Activated CD4-positive, alpha-beta memory T cell treated with anti-CD3 and anti-CD28 coated beads for 36 hours (primary cell): ENCODE measurements at regions of chr2 and their contacts with region 1.

Region 1: GRCh38 chr2:189661148-189661956 is at the start of gene ASNSD1:
- DNase-seq: peak; percentile 98
- H3K4me3 Mint-ChIP-seq: no peak within 1 kb of the TSS
- H3K27ac Mint-ChIP-seq: no peak within 1 kb of the TSS
- H3K4me1 Mint-ChIP-seq: peaks cover 51% of the 10 kb centered on the region
- H3K27me3 Mint-ChIP-seq: no peaks in the 10 kb centered on the region
- total RNA-seq, gene ASNSD1: 44.5 to 47.0 TPM

Region 2: GRCh38 chr2:189037518-189037917 is 623.8 kb before region 1 on chr2:
- CTCF ChIA-PET with region 1: no interaction called
- POLR2A ChIA-PET with region 1: no interaction called
- intact Hi-C with region 1: no loop called
- DNase-seq: no peak
- H3K4me3 Mint-ChIP-seq: no peak overlapping the region
- H3K27ac Mint-ChIP-seq: no peak overlapping the region
- H3K4me1 Mint-ChIP-seq: peaks cover 3% of the 10 kb centered on the region
- H3K27me3 Mint-ChIP-seq: no peaks in the 10 kb centered on the region

Region 3: GRCh38 chr2:189641590-189641989 is 19.8 kb before region 1 on chr2:
- CTCF ChIA-PET with region 1: interaction called, 5 read pairs
- POLR2A ChIA-PET with region 1: interaction called, 9 read pairs
- intact Hi-C with region 1: loop called (anchors 1 kb)
- DNase-seq: peak; percentile 74
- H3K4me3 Mint-ChIP-seq: no peak overlapping the region
- H3K27ac Mint-ChIP-seq: peak overlapping the region; percentile 36
- H3K4me1 Mint-ChIP-seq: peaks cover 27% of the 10 kb centered on the region
- H3K27me3 Mint-ChIP-seq: no peaks in the 10 kb centered on the region

Region 4: DNA sequence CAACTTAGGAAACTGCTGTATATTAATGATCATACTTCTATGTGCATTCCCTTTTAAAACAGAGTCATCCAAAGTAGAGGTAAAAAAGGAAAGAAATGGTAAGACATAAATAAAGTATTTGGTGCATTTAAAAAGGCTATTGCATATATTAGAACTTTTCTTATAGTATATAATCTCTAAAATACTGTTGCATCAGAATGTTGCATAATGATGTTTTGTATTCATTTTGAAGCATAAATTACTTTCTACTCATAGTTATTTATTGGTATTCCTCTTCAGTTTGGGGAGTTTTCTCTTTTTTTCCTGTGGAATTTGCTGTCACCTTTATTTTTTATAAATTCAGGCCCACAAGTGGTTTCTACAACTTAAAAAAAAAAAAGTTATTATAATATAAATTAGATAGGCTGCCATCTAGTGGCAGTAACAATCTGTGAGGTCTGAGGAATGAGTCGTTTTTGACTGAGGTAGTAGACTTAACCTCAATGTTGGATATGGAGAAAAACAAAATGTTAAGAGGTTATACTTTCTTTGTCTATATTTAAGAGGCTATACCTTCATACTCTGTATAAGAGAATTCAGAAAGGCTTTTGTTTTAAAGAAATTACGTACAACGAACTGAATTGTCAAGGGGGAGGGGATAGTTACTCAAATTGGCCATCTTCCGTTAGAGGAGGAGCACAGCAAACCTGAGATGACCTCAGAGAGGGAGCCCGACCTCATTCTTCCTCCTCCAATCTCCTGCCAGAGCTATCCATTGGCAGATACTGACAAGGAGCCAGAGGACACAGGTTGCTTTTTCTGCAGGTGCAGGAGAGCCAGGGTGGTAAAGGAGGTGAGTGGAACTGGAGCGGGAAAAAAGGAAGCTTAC is 36.9 kb after region 1 on chr2:
- CTCF ChIA-PET with region 1: interaction called, 80 read pairs
- POLR2A ChIA-PET with region 1: no interaction called
- intact Hi-C with region 1: loop called (anchors 1 kb)
- DNase-seq: no peak
- H3K4me3 Mint-ChIP-seq: no peak overlapping the region
- H3K27ac Mint-ChIP-seq: no peak overlapping the region
- H3K4me1 Mint-ChIP-seq: no peaks in the 10 kb centered on the region
- H3K27me3 Mint-ChIP-seq: no peaks in the 10 kb centered on the region

Region 5: GRCh38 chr2:189783927-189784867 is 122.8 kb after region 1 on chr2 and contains the starts of genes ORMDL1 and PMS1:
- CTCF ChIA-PET with region 1: interaction called, 6 read pairs
- POLR2A ChIA-PET with region 1: interaction called, 6 read pairs
- intact Hi-C with region 1: loop called (anchors 1 kb)
- DNase-seq: peak; percentile 96
- H3K4me3 Mint-ChIP-seq: peak within 1 kb of the TSS; percentile 90
- H3K27ac Mint-ChIP-seq: peak within 1 kb of the TSS; percentile 95
- H3K4me1 Mint-ChIP-seq: peaks cover 52% of the 10 kb centered on the region
- H3K27me3 Mint-ChIP-seq: no peaks in the 10 kb centered on the region
- total RNA-seq, gene ORMDL1: 47.0 to 49.8 TPM
- total RNA-seq, gene PMS1: 36.0 to 38.6 TPM

Region 6: GRCh38 chr2:190319555-190320498 is 658.5 kb after region 1 on chr2 and contains the start of gene HIBCH:
- CTCF ChIA-PET with region 1: interaction called, 3 read pairs
- POLR2A ChIA-PET with region 1: no interaction called
- intact Hi-C with region 1: loop called (anchors 1 kb)
- DNase-seq: peak; percentile 96
- H3K4me3 Mint-ChIP-seq: peak within 1 kb of the TSS; percentile 87
- H3K27ac Mint-ChIP-seq: peak within 1 kb of the TSS; percentile 94
- H3K4me1 Mint-ChIP-seq: peaks cover 52% of the 10 kb centered on the region
- H3K27me3 Mint-ChIP-seq: no peaks in the 10 kb centered on the region
- total RNA-seq, gene HIBCH: 33.9 to 37.8 TPM

Region 7: GRCh38 chr2:190534310-190535120 is 873.2 kb after region 1 on chr2 and contains the start of gene NEMP2:
- CTCF ChIA-PET with region 1: no interaction called
- POLR2A ChIA-PET with region 1: no interaction called
- intact Hi-C with region 1: loop called (anchors 1 kb)
- DNase-seq: peak; percentile 86
- H3K4me3 Mint-ChIP-seq: peak within 1 kb of the TSS; percentile 95
- H3K27ac Mint-ChIP-seq: peak within 1 kb of the TSS; percentile 99
- H3K4me1 Mint-ChIP-seq: peaks cover 57% of the 10 kb centered on the region
- H3K27me3 Mint-ChIP-seq: no peaks in the 10 kb centered on the region
- total RNA-seq, gene NEMP2: 28.8 to 30.0 TPM